ENCODE measurements at regions of chr19 and their contacts with region 1.

Region 1: GRCh38 chr19:15264061-15264932 is 32.0 kb upstream of the EPHX3 start:
- DNase-seq: peak; percentile 93

Region 2: DNA sequence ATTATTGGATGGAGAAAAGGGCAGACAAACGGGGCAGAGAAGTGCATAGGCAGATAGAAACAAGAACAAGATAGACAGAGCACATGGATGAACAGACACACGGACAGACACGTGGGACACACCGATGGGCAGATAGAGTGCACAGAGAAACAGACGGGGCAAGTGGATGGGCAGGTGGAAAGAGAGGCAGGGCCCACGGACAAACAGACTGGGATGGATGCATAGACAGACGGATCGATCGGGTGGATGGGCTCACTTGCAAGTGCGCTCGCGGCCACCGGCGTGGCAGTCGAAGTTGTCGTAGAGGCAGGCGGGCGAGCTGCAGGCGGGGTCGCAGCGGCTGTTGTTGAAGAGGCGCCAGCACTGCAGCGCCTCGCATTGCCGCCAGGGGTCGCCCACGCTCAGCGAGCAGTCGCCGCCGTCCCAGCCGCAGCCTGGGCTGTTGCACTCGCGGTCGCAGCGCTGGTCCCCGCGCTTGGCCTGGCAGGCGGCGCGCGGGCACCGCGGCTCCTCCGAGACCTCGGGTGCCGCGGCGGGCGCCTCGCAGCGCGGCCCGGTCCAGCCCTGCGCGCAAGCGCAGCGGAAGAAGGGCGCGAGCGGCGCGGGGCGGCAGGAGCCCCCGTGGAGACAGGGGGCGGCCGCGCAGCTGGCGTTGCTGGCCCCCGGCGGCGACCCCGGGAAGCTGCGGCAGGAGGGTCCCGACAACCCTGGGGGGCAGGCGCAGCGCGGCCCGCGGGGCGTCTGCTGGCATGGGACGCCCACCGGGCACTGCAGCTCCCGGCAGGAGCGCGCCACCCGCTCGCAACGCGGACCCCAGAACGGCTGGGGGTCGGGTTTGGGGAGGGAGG is 86.8 kb before region 1 on chr19:
- intact Hi-C with region 1: loop called in 1 of 2 experiments (anchors 5 kb)
- DNase-seq: peak; percentile 94

Region 3: DNA sequence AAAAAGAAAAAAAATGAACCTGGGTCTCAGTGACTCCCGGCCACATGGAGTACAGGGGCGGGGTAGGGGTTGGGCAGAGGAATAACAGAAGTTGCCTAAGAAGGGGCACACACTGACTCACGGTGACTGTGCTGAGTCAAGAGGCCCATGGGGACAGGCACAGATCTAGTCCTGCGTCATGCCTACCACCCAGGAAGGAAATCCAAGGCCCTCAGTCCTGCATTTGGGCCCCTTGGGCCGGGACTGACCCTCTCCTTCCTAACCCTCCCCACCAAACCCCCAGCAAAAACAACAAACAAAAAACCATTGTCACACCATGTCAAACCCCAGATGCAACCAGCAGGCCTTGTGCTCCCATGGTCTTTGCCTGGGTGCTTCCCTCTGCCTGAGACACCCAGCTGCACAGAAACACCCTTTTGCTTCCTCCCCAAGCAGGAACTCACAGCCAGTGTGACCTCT is 53.9 kb before region 1 on chr19:
- intact Hi-C with region 1: no loop called
- DNase-seq: peak; percentile 88

Region 4: DNA sequence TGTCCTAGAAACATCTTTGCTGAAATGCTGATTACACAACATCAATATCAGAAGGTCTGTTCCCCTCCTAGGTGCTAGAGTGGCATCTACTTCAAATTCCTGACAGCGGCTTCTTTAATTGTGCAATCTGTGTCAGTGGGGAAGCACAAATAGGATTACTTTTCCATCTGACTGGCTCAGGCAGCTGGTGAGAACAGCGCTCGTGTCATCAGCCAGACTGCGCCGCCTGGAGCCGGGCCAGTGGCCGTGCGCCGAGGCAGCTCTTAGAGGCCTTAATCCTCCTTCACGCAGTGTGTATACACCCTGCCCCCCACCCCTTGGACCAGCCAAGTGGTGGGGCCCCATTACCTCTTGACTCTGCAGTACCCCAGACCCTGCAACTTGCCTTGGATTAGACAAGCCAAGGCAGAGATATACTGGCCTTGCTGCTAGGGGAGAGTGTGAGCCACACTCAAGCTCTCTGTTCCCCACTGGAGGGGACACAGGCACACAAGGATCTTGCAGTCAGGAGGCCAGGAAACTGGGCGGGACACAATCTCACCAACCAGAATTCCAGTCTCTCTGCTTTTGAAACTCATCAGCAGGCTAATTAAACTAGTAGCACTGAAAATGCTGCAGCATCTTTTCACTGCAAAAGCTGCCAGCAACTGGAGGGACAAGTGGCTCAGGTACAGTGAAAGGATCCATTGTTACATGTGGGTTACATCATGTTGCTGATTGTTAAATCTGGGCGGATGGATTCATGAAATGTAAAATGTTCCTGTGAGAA is 16.8 kb after region 1 on chr19:
- intact Hi-C with region 1: loop called in 1 of 2 experiments (anchors 2 kb)
- DNase-seq: peak; percentile 94

Region 5: DNA sequence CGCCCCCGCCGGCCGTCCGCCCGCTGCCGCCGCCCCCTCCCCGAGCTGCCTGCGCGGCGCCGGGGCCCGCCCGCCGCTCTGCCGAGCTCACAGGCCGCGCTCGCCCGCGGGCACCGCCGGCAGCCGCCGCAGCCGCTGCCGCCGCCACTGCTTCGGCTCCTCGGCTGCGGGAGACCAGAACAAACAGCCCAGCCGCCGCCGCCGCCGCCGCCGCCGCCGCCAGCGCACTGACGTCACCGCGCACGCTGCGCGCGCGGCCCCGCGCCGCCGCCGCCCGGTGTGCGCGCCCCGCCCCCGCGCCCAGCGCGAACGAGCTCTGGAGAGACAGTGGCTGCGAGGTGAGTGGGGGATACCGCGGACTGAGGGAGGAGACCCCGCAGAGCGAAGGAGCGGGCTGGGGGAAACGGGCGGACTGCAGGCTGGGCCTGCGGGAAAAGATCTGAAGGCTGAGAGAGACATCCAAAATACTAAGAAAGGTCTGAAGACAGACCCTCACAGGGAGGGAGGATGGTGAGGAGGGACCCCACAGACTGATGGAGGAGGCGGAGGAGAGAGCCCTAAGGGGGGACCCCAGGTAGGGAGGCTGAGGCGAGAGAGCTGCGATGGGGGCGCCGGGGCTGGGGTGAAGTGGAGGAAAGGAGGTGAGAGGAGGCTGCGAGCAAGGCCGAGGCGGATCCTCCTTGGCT is 68.2 kb after region 1 on chr19 and contains the start of gene BRD4:
- intact Hi-C with region 1: loop called (anchors 5 to 10 kb)
- DNase-seq: peak; percentile 91
- total RNA-seq, gene BRD4: 77.5 to 89.6 TPM

Region 6: DNA sequence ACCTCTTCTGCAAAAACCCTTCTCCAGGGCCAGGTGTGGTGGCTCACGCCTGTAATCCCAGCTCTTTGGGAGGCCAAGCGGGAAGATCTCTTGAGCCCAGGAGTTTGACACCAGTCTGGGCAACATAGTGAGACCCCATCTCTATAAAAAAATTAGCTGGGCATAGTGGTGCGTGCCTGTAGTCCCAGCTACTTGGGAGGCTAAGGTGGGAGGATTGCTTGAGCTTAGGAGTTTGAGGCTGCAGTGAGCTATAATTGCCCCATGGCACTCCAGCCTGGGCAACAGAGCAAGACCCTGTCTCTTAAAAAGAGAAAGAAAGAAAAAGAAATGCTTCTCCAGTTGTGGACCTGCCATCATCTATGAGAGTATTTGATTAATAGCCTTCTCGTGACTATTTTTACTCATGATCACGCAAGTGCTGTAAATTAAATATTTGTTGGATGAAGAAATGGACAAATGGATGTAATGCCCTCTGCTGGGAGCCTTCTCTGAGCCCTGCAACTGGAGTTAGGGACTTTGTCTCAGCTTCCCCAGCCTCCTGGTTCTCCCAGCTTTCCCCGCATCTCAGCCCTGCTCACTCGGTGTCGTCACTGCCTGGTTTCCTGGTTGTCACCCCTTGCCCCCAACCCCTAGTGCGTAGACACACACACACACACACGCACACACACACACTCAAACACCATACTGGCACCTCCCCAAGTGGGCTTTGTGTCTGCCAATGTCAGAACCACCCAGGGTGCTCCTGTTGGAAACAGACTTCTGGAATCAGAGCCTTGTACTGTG is 173.2 kb after region 1 on chr19:
- intact Hi-C with region 1: loop called in 1 of 2 experiments (anchors 5 kb)
- DNase-seq: no peak

Region 7: GRCh38 chr19:16702118-16702517 is 1437.8 kb after region 1 on chr19:
- intact Hi-C with region 1: no loop called
- DNase-seq: no peak

Measured in posterior vena cava (tissue), 2 donors.